ENCODE measurements at regions of chr3 and their contacts with region 1.

Region 1: DNA sequence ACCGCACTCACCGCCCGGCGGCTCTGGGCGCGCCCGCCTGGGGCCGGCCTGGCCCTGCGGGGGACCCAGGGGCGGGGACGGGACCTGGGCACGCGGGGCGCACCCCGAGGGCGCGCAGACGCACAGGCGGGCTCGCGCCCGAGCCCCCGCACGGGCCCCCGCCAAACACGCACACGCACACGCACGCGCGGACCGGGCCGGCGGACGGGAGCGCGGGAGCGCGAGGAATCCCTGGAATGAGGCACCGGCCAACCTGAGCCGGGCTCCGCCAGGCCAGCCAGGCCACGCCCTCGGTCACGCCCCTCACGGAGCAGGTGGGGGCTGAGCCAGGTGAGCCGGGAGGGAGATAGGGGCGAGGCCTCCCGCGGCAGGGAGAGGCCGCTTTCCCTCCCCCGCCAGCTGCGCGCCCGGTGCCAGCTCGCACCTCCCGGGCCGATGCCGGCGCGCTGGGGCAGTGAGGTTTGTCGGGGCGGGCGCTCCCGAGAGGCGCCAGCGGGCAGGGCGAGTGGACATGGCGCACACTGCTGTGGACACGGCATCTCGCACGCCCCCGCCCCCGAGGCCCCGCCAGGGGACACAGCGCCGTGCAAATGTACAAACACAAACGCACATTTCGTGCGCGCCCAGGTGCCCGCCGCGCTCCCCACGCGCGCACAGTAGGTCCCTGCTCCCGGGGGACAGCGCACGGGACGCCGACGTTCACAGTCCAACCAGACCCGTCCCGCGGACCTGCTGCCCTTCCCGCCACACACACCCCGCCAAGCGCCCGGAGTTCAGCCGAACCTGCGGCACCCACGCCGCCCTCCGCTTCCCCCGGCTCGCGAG is 75.9 kb upstream of the VGLL4 start:
- DNase-seq: peak; percentile 94
- H3K4me3 ChIP-seq: peak overlapping the region; percentile 71 to 95 (median 83)
- H3K27ac ChIP-seq: peak overlapping the region; percentile 93
- H3K4me1 ChIP-seq: peaks cover 22% of the 10 kb centered on the region
- H3K27me3 ChIP-seq: no peaks in the 10 kb centered on the region
- CTCF ChIP-seq: no peak

Region 2: GRCh38 chr3:11568503-11569155 is 151.0 kb before region 1 on chr3:
- CTCF ChIA-PET with region 1: no interaction called
- dilution Hi-C with region 1: no loop called
- in situ Hi-C with region 1: no loop called
- intact Hi-C with region 1: loop called (anchors 2 kb)
- DNase-seq: peak; percentile 92
- H3K4me3 ChIP-seq: peak overlapping the region in 2 of 3 experiments; percentile 24 to 33
- H3K27ac ChIP-seq: peak overlapping the region; percentile 96
- H3K4me1 ChIP-seq: peaks cover 59% of the 10 kb centered on the region
- H3K27me3 ChIP-seq: no peaks in the 10 kb centered on the region
- CTCF ChIP-seq: no peak

Region 3: DNA sequence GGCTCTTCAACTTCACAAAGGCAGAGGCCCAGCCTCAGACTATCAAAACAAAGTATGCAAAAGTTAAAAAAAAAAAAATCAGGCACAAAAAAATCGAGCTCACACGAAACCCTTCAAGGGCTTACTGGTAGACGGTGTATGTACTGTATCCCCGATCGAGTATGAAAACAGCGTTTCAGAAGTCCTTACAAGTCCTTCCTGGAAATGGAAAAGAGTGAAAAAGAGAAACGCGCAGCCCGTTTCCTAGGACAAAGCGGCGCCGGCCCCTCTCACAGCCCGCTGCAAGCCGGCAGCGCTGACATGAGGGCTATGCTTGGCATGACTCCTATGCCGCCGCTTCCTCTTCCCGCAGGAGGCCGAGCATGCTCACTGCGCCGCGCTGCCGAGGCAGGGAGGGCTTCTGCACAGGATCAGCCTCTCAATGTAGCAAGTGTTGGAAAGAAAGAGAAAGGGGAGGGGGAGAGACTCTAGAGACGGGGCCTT is 76.0 kb before region 1 on chr3 and contains the start of gene VGLL4:
- CTCF ChIA-PET with region 1: interaction called, 10 read pairs
- dilution Hi-C with region 1: no loop called
- in situ Hi-C with region 1: no loop called
- intact Hi-C with region 1: no loop called
- DNase-seq: peak; percentile 77
- H3K4me3 ChIP-seq: peak within 1 kb of the TSS; percentile 57 to 65 (median 61)
- H3K27ac ChIP-seq: peak within 1 kb of the TSS; percentile 93
- H3K4me1 ChIP-seq: peaks cover 31% of the 10 kb centered on the region
- H3K27me3 ChIP-seq: no peaks in the 10 kb centered on the region
- CTCF ChIP-seq: peak; percentile 6 to 31
- total RNA-seq, gene VGLL4: 30.8 to 77.3 TPM

Region 4: GRCh38 chr3:11699083-11699427 is 20.6 kb before region 1 on chr3:
- CTCF ChIA-PET with region 1: no interaction called
- dilution Hi-C with region 1: no loop called
- in situ Hi-C with region 1: no loop called
- intact Hi-C with region 1: loop called (anchors 1 kb)
- DNase-seq: peak; percentile 78
- H3K4me3 ChIP-seq: no peak overlapping the region
- H3K27ac ChIP-seq: peak overlapping the region; percentile 87
- H3K4me1 ChIP-seq: peaks cover 27% of the 10 kb centered on the region
- H3K27me3 ChIP-seq: no peaks in the 10 kb centered on the region
- CTCF ChIP-seq: no peak

Region 5: DNA sequence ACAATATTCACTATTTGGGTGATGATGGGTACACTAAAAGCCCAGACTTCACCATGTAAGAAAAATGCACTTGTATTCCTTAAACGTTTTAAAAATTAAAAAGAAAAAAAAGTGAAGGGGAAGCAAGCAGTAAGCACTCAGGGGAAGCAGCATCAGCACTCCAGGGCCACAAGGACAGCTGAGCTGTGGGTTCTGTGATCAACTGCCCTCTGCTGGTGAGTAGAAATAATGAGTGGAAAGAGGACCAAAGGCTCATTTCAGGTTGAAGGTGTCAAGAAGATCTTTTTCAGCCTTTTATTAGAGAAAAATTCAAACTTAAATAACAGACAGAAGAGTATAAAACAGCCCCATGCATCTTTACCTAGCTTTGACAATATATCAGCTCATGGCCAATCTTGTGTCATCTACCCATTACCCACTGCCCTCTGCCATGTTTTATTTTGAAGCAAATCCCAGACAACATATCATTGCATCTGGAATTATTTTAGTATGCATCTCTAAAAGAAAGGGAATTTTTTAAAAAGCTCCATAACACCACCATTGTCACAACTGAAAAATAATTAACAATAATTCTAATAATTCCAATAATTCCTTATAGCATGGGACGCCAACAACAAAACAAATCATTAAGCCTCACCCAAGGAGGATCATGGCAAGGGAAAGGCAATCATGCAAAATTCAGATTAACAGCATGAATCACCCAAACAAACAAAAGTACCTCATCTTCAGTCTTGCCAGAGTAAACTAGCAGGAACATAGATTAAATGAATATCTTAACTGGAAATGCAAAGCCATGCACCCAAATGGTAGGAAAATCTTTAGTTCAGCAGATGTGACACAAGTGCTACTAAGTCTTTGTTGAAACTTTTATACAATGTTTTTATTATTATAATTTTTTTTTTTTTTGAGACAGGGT is 84.6 kb after region 1 on chr3:
- CTCF ChIA-PET with region 1: no interaction called
- dilution Hi-C with region 1: no loop called
- in situ Hi-C with region 1: no loop called
- intact Hi-C with region 1: loop called (anchors 1 kb)
- DNase-seq: peak; percentile 40
- H3K4me3 ChIP-seq: no peak overlapping the region
- H3K27ac ChIP-seq: no peak overlapping the region
- H3K4me1 ChIP-seq: no peaks in the 10 kb centered on the region
- H3K27me3 ChIP-seq: no peaks in the 10 kb centered on the region
- CTCF ChIP-seq: peak; percentile 70 to 78

Measured in mammary epithelial cell (primary cell).